ENCODE measurements at regions of chr4 and their contacts with region 1.

Region 1: GRCh38 chr4:40897557-40898203 is 147.9 kb downstream of the NSUN7 start:
- DNase-seq: peak; percentile 59 to 86 (median 73)
- H3K4me3 ChIP-seq: peak overlapping the region in 1 of 4 donors; percentile 21
- H3K27ac ChIP-seq: no peak overlapping the region
- H3K4me1 ChIP-seq: no peaks in the 10 kb centered on the region
- H3K27me3 ChIP-seq: no peaks in the 10 kb centered on the region
- CTCF ChIP-seq: peak; percentile 52 to 86 (median 74)
- POLR2A ChIP-seq: no peak

Region 2: GRCh38 chr4:40722576-40723161 is 175.0 kb before region 1 on chr4:
- intact Hi-C with region 1: no loop called
- DNase-seq: peak in 2 of 7 donors; percentile 34 to 35
- H3K4me3 ChIP-seq: no peak overlapping the region
- H3K27ac ChIP-seq: peak overlapping the region in 2 of 5 donors; percentile 47 to 67
- H3K4me1 ChIP-seq: no peaks in the 10 kb centered on the region
- H3K27me3 ChIP-seq: no peaks in the 10 kb centered on the region
- CTCF ChIP-seq: no peak
- POLR2A ChIP-seq: no peak

Region 3: GRCh38 chr4:40736910-40737309 is 160.8 kb before region 1 on chr4:
- intact Hi-C with region 1: loop called (anchors 5 to 10 kb)
- DNase-seq: no peak
- H3K4me3 ChIP-seq: no peak overlapping the region
- H3K27ac ChIP-seq: no peak overlapping the region
- H3K4me1 ChIP-seq: peaks cover 2% of the 10 kb centered on the region in 2 donors
- H3K27me3 ChIP-seq: no peaks in the 10 kb centered on the region
- CTCF ChIP-seq: peak; percentile 10 to 57 (median 38)
- POLR2A ChIP-seq: no peak